ENCODE measurements at regions of chr2 and their contacts with region 1.

Region 1: DNA sequence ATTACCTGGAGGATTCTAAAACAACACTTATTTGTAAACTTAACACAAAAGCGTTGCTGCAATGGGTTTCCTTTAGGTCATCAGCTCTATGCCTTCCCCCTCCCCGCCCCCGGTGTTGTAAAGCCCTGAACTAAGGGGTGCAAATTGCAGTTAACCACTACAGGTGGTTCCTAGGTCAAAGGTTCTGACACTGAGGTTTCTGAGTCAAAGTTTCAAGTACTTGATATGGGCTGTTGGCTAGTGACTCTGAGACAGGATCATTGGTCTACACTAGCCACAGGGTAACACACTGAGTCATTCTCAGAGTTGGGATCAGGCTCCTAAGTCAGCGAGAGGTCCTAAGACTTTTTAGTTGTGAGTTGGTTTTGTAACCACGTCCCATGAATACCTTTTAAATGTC is 15.4 kb downstream of the IL1B start:
- DNase-seq: peak; percentile 73
- H3K4me3 Mint-ChIP-seq: no peak overlapping the region
- H3K27ac Mint-ChIP-seq: peak overlapping the region; percentile 20
- H3K4me1 Mint-ChIP-seq: peaks cover 26% of the 10 kb centered on the region
- H3K27me3 Mint-ChIP-seq: no peaks in the 10 kb centered on the region

Region 2: DNA sequence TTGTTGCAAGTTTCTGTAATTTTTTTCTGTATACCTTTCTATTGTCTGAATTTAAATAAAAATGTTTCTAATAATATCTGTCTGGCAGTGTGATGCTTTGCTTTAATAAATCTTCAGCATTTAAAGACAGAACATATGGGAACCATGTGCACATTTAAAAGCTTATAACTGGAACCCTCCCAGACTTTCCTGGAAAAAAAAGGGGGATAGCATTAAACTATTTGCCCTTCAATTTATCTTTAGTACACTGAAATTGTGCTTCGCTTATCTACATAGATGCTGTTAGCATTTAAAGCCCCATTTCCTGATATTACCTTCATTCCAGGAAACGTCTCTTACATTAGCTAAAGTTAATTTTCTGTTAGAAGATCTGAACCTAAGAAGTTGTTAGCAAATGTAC is 481.2 kb before region 1 on chr2:
- CTCF ChIA-PET with region 1: no interaction called
- POLR2A ChIA-PET with region 1: no interaction called
- intact Hi-C with region 1: no loop called
- DNase-seq: no peak
- H3K4me3 Mint-ChIP-seq: no peak overlapping the region
- H3K27ac Mint-ChIP-seq: no peak overlapping the region
- H3K4me1 Mint-ChIP-seq: peaks cover 3% of the 10 kb centered on the region
- H3K27me3 Mint-ChIP-seq: no peaks in the 10 kb centered on the region

Region 3: GRCh38 chr2:112764071-112765044 is 56.8 kb before region 1 on chr2 and contains the start of gene CKAP2L:
- CTCF ChIA-PET with region 1: no interaction called
- POLR2A ChIA-PET with region 1: no interaction called
- intact Hi-C with region 1: loop called (anchors 5 kb)
- DNase-seq: peak; percentile 98
- H3K4me3 Mint-ChIP-seq: peak within 1 kb of the TSS; percentile 90
- H3K27ac Mint-ChIP-seq: peak within 1 kb of the TSS; percentile 85
- H3K4me1 Mint-ChIP-seq: peaks cover 31% of the 10 kb centered on the region
- H3K27me3 Mint-ChIP-seq: no peaks in the 10 kb centered on the region
- total RNA-seq, gene CKAP2L: 42.1 to 46.1 TPM

Region 4: GRCh38 chr2:112794131-112794733 is 26.9 kb before region 1 on chr2:
- CTCF ChIA-PET with region 1: no interaction called
- POLR2A ChIA-PET with region 1: no interaction called
- intact Hi-C with region 1: loop called (anchors 1 kb)
- DNase-seq: peak; percentile 74
- H3K4me3 Mint-ChIP-seq: peak overlapping the region; percentile 18
- H3K27ac Mint-ChIP-seq: peak overlapping the region; percentile 85
- H3K4me1 Mint-ChIP-seq: peaks cover 27% of the 10 kb centered on the region
- H3K27me3 Mint-ChIP-seq: no peaks in the 10 kb centered on the region

Region 5: DNA sequence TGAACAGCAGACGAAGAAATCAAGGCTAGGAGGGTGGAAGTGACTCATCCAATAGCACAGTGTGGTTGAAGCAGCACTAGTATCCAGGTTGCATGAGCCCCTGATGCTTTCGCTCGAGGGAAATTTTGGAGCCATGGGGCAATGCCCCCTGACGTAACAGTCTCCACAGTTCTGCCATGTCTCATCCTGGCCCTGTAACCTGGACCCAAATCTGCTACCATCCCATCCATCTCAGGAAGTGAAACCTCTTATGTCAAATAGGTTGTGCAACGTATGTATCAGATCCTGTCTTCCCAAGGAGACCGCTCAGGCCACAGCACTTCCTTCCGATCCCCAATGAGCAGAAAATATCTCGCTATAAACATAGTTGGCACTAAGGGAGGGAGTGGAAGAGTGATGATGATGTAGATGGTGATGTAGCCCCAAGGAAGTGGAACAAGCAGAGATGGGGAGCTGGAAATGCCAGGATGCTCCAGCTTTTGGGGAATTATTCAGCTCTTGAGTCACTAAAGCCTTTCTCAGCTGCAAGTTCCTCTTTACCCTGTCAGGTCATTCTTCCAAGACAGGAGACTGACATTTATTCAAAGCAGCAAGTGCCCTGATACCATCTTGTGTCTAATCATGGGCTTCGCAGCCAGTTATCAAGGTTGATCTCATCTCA is 18.4 kb after region 1 on chr2:
- CTCF ChIA-PET with region 1: no interaction called
- POLR2A ChIA-PET with region 1: no interaction called
- intact Hi-C with region 1: loop called (anchors 1 kb)
- DNase-seq: no peak
- H3K4me3 Mint-ChIP-seq: no peak overlapping the region
- H3K27ac Mint-ChIP-seq: no peak overlapping the region
- H3K4me1 Mint-ChIP-seq: peaks cover 2% of the 10 kb centered on the region
- H3K27me3 Mint-ChIP-seq: peaks cover 16% of the 10 kb centered on the region

Measured in activated CD4-positive, alpha-beta memory T cell treated with anti-CD3 and anti-CD28 coated beads for 36 hours (primary cell).